Prostate gland (tissue), 2 donors: ENCODE measurements at regions of chr18 and their contacts with region 1.

Region 1: GRCh38 chr18:31643003-31643402 is 41.4 kb downstream of the B4GALT6 start:
- DNase-seq: no peak
- H3K4me3 ChIP-seq: no peak overlapping the region
- H3K27ac ChIP-seq: no peak overlapping the region
- H3K4me1 ChIP-seq: no peaks in the 10 kb centered on the region
- H3K27me3 ChIP-seq: no peaks in the 10 kb centered on the region
- CTCF ChIP-seq: no peak
- POLR2A ChIP-seq: no peak

Region 2: DNA sequence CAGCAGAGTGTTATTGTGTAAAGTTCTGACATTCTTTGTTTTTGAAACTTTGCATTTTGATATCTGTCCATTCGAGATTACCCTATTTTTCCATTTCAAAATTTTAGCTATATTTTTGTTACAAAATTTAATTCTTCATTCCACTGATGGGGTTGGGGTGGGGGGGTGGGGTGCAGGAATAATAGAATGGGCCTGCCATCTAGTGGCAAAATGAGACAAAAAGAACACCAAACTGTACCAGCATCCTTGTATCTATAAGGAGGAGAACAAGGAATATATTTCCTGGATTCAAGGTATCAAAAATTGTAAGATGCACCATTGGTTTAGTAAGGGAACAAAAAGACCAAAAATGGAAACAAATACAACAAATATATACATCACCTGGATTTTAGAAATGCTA is 79.2 kb before region 1 on chr18:
- intact Hi-C with region 1: no loop called
- DNase-seq: no peak
- H3K4me3 ChIP-seq: no peak overlapping the region
- H3K27ac ChIP-seq: no peak overlapping the region
- H3K4me1 ChIP-seq: no peaks in the 10 kb centered on the region
- H3K27me3 ChIP-seq: no peaks in the 10 kb centered on the region
- CTCF ChIP-seq: no peak
- POLR2A ChIP-seq: no peak

Region 3: GRCh38 chr18:31684279-31685096 is 41.5 kb after region 1 on chr18 and contains the start of gene B4GALT6:
- intact Hi-C with region 1: loop called (anchors 5 kb)
- DNase-seq: peak; percentile 12
- H3K4me3 ChIP-seq: peak within 1 kb of the TSS; percentile 57 to 62
- H3K27ac ChIP-seq: peak within 1 kb of the TSS; percentile 80 to 81
- H3K4me1 ChIP-seq: no peaks in the 10 kb centered on the region
- H3K27me3 ChIP-seq: no peaks in the 10 kb centered on the region
- CTCF ChIP-seq: no peak
- POLR2A ChIP-seq: no peak
- total RNA-seq, gene B4GALT6: 3.5 to 9.0 TPM